ENCODE measurements at regions of chr6 and their contacts with region 1.

Region 1: DNA sequence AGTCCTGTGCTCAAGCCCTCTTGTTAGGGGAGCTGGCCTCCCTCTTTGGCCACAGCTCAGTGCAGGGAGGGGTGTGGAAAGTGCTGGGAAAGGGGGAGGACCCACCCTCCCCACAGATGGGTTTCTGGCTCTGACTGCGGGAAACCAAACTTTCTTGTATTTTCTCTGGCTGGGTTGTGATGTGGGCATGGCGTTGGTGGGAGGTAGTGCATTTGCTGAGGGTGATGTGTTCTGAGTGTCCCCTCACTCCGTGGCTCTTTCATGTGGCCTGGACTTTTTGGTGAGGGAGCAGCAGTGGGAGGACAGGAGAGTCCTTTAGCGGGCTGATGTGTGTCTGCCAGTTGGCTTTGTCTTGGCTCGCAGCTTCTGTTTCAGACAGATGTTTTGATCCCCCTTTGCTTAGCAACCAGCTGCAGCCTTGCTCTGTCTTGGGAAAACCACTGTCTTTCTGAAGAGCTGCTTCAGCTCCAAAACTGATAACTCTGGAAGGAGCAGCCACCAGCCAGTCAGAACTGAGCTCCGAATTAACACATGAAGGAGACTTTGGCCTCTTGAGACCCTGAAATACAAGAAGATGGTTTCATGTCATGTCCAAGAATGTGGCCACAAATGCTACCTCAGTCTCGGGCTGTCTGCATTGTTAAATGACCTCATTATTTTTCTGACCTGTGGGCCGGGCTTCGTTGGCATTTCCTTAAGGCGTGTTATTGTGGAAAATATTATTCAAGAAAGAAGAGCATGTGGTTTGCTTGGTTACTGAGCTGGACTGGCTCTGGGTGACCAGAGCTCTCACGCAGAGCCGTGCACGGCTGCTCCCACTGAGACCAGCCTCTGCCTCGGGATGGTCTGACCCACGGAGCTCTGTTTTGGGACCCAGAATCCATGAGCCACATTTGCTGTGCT is 21.5 kb downstream of the SYNJ2 start:
- DNase-seq: peak; percentile 83 to 86
- ATAC-seq: peak; percentile 91
- H3K4me3 ChIP-seq: no peak overlapping the region
- H3K27ac ChIP-seq: peak overlapping the region; percentile 90 to 96
- H3K4me1 ChIP-seq: peaks cover 0 to 4% of the 10 kb centered on the region in 2 donors
- H3K27me3 ChIP-seq: no peaks in the 10 kb centered on the region

Region 2: DNA sequence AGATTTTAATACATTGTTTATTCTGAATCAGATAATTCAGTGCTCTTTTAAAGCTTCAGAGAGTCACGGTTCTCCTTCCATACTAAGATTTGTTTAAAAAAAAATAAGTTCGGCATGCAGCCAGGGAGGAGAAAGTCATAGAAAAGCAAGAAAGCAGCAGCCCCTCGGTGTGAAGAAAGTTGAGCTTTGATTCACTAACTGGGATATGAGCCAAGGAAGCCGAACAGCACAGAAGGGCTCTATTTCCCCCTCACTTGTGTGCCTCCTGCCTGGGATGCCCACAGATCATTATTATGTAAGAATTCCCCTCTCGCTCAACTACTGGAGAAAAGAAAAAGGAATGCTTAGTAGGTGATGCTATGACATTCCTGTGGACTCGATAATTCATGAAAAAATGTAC is 90.9 kb before region 1 on chr6:
- intact Hi-C with region 1: no loop called
- DNase-seq: no peak
- ATAC-seq: no peak
- H3K4me3 ChIP-seq: no peak overlapping the region
- H3K27ac ChIP-seq: no peak overlapping the region
- H3K4me1 ChIP-seq: no peaks in the 10 kb centered on the region
- H3K27me3 ChIP-seq: no peaks in the 10 kb centered on the region

Region 3: DNA sequence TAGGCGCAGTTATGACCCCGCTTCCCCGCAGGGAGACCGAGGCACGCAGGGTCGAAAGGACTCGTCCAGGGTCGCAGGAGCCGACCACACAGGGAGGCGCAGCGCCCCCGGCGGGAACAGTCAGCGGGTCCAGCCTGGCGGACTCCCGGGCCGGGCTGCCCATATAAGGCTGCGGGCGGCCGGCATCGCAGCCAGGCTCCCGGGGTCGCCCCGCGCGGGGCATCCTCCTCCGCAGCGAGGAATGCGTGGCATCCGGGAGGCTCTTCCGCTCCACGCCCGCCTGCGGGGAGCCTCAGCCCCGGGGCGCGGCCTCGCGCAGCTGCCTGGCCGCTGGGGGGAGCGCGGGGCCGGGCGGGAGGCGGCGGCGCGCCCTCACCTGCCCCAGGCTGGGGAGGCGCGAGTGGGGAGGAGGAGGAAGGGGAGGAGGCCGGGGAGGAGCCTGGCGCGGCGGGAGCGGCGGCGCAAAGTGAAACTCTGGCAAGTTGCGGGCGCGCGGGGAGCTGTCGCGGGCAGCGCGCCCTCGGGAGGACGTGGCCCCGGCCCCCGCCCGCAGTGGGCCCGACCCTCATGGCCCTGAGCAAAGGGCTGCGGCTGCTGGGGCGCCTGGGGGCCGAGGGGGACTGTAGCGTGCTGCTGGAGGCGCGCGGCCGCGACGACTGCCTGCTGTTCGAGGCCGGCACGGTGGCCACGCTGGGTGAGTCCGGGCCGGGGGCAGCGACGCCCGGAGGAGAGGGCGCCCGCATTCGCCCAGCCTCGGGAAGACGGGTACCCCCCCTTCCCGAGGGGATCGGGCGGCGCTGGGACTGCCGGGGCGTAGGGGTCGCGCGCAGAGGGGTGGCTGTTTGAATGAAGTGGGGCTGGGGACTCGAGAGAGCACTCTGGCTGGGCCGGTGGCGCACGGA is 21.6 kb before region 1 on chr6 and contains the start of gene SYNJ2:
- intact Hi-C with region 1: loop called in 1 of 2 experiments (anchors 2 kb)
- DNase-seq: peak; percentile 85 to 94
- ATAC-seq: peak; percentile 85
- H3K4me3 ChIP-seq: peak within 1 kb of the TSS; percentile 93 to 95
- H3K27ac ChIP-seq: peak within 1 kb of the TSS in 1 of 2 donors; percentile 52
- H3K4me1 ChIP-seq: no peaks in the 10 kb centered on the region
- H3K27me3 ChIP-seq: no peaks in the 10 kb centered on the region
- total RNA-seq, gene SYNJ2: 26.8 to 38.7 TPM

Region 4: DNA sequence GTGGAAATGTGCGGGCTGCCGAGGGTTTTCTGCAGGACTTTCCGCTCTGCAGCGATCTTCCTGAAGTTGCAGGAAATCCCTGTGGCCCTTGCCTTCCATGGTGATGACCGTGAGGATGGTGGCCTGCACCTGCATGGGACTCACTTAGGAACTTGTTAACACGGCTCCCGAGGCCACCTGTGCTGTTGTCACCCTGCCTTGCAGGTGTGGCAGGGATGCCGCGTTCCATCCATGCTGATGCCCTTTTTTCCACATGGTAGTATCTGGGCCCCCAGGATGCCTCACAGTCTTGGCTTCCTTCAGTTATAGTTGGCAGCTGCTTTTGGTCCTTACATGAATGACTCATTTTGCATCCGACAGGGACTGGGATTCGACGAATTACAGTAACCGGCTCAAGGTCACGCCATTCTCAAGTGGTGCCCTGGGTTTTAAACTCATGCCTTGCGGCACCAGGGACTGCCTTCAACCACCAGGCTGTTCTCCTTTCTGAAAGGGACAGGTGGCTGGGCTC is 15.7 kb after region 1 on chr6:
- intact Hi-C with region 1: loop called in 1 of 2 experiments (anchors 2 kb)
- DNase-seq: peak in 1 of 2 donors; percentile 73
- ATAC-seq: peak; percentile 33
- H3K4me3 ChIP-seq: no peak overlapping the region
- H3K27ac ChIP-seq: peak overlapping the region; percentile 20 to 22
- H3K4me1 ChIP-seq: no peaks in the 10 kb centered on the region
- H3K27me3 ChIP-seq: no peaks in the 10 kb centered on the region

Region 5: DNA sequence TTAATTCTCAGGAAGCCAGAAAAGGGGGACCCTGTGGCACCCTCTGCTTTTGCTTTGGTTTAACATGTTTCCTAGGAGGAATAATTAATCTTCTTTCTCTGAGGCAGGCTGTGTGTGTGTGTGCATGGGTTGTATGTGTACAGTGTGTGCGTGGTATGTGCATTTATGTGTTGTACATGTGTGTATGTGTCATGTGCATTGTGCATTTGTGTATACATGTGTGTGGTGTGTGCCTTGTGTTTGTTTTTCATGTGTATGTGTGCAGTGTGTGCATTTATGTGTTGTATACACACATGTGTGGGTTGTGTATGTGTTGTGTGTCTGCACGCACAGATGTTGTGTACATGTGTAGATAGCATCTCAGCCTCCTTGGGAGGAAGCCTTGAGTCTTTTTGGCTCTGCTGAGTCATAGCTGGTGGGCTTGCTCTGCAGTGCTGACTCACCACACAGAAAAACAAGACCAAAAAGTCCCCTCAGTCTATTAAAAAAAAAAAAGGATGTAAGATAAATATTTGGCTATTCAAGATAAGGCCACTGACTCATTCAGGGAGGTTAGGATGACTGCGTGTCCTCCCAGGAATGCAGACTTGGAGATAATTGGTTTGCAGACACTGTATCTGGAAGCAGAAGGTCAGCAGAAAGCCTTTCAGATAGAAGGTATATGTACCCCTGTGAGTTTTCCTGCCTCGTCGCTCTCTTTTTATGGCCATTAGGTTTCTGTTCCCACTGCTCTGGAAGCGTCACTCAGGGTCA is 37.0 kb after region 1 on chr6:
- intact Hi-C with region 1: loop called in 1 of 2 experiments (anchors 5 kb)
- DNase-seq: peak; percentile 62 to 69
- ATAC-seq: peak; percentile 74
- H3K4me3 ChIP-seq: no peak overlapping the region
- H3K27ac ChIP-seq: peak overlapping the region; percentile 68 to 99
- H3K4me1 ChIP-seq: peaks cover 2 to 10% of the 10 kb centered on the region in 2 donors
- H3K27me3 ChIP-seq: no peaks in the 10 kb centered on the region

Region 6: DNA sequence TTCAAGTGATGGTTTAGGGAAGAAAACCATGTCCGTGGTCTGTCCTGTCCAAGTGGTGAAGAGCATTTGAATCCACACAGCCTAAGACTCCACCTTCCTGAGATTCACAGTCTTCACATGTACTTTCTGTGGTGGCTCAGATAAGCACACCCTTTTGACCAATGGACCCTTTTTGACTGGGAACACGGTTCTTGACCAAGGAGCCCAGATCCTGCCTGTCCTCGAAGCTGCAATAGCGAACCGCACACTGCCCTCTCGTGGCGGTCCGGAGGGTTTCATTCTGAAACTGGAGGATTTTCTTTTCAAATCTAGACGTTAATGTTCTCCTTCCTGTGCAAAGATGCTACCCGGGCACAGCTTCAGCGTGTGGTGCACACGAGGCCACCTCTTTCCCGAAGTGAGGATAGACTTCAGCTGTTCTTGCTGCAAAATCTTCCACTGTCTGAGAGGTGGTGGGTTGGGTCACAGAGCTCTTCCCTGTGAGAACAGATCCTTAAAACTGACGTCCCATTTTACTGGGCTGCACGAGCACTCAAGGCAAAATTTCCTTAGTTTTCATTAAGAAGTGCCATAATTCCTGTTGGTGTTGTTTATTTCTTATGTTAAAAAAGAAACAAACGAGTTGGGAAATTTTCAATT is 69.0 kb after region 1 on chr6:
- intact Hi-C with region 1: loop called in 1 of 2 experiments (anchors 5 kb)
- DNase-seq: peak; percentile 84 to 93
- ATAC-seq: peak; percentile 78
- H3K4me3 ChIP-seq: no peak overlapping the region
- H3K27ac ChIP-seq: no peak overlapping the region
- H3K4me1 ChIP-seq: no peaks in the 10 kb centered on the region
- H3K27me3 ChIP-seq: no peaks in the 10 kb centered on the region

Region 7: DNA sequence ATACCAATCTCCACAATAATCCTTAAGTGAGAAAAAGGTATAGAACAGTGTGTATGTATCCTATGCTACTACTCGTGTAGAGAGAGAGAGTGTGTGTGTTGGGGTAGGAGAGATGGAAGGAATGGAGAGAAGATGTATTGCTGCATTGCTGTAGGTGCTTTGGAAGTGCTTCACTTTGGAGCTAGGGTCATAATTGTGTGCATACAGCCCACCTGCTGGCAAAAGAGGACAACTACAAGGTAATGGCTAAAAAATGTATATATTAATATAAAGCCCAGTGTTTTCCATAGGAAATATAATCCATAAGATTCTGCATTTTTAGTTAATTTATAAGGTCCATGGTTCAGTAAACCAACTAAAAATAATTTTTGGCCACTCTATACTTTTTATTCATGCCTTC is 128.7 kb after region 1 on chr6:
- intact Hi-C with region 1: no loop called
- DNase-seq: no peak
- ATAC-seq: no peak
- H3K4me3 ChIP-seq: no peak overlapping the region
- H3K27ac ChIP-seq: no peak overlapping the region
- H3K4me1 ChIP-seq: no peaks in the 10 kb centered on the region
- H3K27me3 ChIP-seq: no peaks in the 10 kb centered on the region

Region 8: DNA sequence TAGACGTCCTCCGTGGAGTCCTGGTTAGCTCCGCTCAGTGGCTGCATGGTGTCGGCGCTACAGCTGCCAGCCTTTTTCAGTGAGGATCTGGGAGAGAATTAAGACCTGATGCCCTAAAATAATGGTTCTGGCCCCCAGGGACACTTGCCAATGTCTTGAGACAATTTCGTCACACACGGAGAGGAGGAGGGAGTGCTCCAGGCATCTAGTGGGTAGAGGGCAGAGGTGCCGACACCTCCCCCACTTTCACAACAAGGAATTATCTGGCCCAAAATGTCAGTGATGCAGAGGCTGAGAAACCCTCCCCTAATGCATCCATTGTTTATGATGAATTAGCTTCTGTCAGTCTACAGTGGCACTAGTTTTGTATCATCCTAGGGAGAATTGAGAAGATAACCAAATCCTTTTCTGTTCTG is 581.0 kb after region 1 on chr6:
- intact Hi-C with region 1: no loop called
- DNase-seq: no peak
- ATAC-seq: no peak
- H3K4me3 ChIP-seq: no peak overlapping the region
- H3K27ac ChIP-seq: no peak overlapping the region
- H3K4me1 ChIP-seq: no peaks in the 10 kb centered on the region
- H3K27me3 ChIP-seq: no peaks in the 10 kb centered on the region

Measured in aorta (tissue), 5 donors.